ENCODE measurements at regions of chr7 and their contacts with region 1.

Region 1: DNA sequence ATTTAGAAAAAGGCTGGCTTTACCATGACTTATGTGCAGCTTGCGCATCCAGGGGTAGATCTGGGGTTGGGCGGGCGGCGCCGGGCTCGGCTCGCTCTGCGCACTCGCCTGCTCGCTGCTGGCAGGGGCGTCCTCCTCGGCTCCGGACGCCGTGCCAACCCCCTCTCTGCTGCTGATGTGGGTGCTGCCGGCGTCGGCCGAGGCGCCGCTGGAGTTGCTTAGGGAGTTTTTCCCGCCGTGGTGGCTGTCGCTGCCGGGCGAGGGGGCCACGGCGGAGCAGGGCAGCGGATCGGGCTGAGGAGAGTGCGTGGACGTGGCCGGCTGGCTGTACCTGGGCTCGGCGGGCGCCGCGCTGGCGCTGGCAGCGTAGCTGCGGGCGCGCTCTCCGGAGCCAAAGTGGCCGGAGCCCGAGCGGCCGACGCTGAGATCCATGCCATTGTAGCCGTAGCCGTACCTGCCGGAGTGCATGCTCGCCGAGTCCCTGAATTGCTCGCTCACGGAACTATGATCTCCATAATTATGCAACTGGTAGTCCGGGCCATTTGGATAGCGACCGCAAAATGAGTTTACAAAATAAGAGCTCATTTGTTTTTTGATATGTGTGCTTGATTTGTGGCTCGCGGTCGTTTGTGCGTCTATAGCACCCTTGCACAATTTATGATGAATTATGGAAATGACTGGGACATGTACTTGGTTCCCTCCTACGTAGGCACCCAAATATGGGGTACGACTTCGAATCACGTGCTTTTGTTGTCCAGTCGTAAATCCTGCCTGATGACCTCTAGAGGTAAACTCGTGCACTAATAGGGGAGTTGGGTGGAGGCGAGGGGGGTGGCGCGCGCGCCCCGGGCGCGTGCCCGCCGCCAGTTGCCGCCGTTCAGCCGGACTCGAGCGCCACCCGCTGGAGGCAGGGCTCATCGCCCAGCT is at the start of gene HOXA5:
- DNase-seq: peak; percentile 78 to 96
- H3K4me3 ChIP-seq: peak within 1 kb of the TSS; percentile 16 to 59 (median 24); a peak in 7 of 8 replicates
- H3K27ac ChIP-seq: no peak within 1 kb of the TSS
- H3K4me1 ChIP-seq: peaks cover 0 to 9% (median 5%) of the 10 kb centered on the region in 4 experiments; a peak in 5 of 7 replicates
- H3K27me3 ChIP-seq: peaks cover 97 to 100% (median 99%) of the 10 kb centered on the region in 4 experiments
- CTCF ChIP-seq: peak in 2 of 3 experiments; percentile 91 to 97; a peak in 3 of 4 replicates
- EP300 ChIP-seq: no peak
- POLR2A ChIP-seq: no peak
- RAD21 ChIP-seq: peak; percentile 93 to 97
- total RNA-seq, gene HOXA5: not detected in 2 replicates

Region 2: DNA sequence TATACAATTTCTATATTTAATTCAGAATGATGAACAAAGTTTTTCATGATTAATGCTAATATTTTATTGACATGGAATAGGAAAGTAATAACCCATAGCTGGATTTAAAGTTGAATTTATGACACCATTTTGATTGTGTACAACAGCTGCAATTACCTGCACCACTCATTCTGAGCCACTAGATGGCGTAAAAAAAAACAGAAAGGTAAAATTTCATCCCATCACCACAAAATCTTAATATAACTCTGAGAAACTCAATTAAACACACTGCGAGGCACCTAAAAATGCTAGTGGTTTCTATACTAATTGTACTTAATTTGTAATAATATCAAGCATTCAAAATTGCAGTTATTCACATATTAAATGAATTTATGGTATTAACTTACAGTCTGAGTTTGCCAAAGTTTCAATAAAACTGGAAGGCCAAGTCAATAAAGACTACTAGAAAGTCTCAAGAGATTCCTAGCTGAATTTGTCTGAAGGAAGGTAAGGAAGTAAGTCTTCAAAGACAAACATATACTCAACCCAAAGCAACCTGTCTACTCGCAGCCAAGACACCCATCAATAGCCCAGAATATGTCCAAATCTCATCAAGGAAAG is 461.4 kb before region 1 on chr7:
- CTCF ChIA-PET with region 1: interaction called, 40 read pairs
- POLR2A ChIA-PET with region 1: no interaction called
- DNase-seq: no peak
- H3K4me3 ChIP-seq: no peak overlapping the region
- H3K27ac ChIP-seq: no peak overlapping the region
- H3K4me1 ChIP-seq: peaks cover 0 to 3% (median 1%) of the 10 kb centered on the region in 4 experiments; a peak in 1 of 7 replicates
- H3K27me3 ChIP-seq: peaks cover 0 to 1% (median 0%) of the 10 kb centered on the region in 4 experiments; a peak in 1 of 7 replicates
- CTCF ChIP-seq: peak in 2 of 3 experiments; percentile 37 to 50; a peak in 2 of 4 replicates
- EP300 ChIP-seq: no peak
- POLR2A ChIP-seq: no peak
- RAD21 ChIP-seq: peak; percentile 36 to 45

Region 3: GRCh38 chr7:26853788-26854393 is 289.4 kb before region 1 on chr7:
- CTCF ChIA-PET with region 1: interaction called, 36 read pairs
- POLR2A ChIA-PET with region 1: no interaction called
- DNase-seq: no peak
- H3K4me3 ChIP-seq: no peak overlapping the region
- H3K27ac ChIP-seq: no peak overlapping the region
- H3K4me1 ChIP-seq: peaks cover 2 to 14% (median 7%) of the 10 kb centered on the region in 4 experiments; a peak in 5 of 7 replicates
- H3K27me3 ChIP-seq: peaks cover 10 to 45% (median 24%) of the 10 kb centered on the region in 4 experiments
- CTCF ChIP-seq: peak in 1 of 3 experiments; percentile 13; a peak in 1 of 4 replicates
- EP300 ChIP-seq: no peak
- POLR2A ChIP-seq: no peak
- RAD21 ChIP-seq: peak; percentile 44 to 51

Region 4: GRCh38 chr7:27031289-27032172 is 111.8 kb before region 1 on chr7:
- CTCF ChIA-PET with region 1: no interaction called
- POLR2A ChIA-PET with region 1: no interaction called
- DNase-seq: no peak
- H3K4me3 ChIP-seq: no peak overlapping the region
- H3K27ac ChIP-seq: no peak overlapping the region
- H3K4me1 ChIP-seq: peaks cover 0 to 9% (median 5%) of the 10 kb centered on the region in 4 experiments; a peak in 4 of 7 replicates
- H3K27me3 ChIP-seq: peaks cover 0 to 10% (median 2%) of the 10 kb centered on the region in 4 experiments; a peak in 3 of 7 replicates
- CTCF ChIP-seq: no peak
- EP300 ChIP-seq: no peak
- POLR2A ChIP-seq: no peak
- RAD21 ChIP-seq: no peak

Region 5: DNA sequence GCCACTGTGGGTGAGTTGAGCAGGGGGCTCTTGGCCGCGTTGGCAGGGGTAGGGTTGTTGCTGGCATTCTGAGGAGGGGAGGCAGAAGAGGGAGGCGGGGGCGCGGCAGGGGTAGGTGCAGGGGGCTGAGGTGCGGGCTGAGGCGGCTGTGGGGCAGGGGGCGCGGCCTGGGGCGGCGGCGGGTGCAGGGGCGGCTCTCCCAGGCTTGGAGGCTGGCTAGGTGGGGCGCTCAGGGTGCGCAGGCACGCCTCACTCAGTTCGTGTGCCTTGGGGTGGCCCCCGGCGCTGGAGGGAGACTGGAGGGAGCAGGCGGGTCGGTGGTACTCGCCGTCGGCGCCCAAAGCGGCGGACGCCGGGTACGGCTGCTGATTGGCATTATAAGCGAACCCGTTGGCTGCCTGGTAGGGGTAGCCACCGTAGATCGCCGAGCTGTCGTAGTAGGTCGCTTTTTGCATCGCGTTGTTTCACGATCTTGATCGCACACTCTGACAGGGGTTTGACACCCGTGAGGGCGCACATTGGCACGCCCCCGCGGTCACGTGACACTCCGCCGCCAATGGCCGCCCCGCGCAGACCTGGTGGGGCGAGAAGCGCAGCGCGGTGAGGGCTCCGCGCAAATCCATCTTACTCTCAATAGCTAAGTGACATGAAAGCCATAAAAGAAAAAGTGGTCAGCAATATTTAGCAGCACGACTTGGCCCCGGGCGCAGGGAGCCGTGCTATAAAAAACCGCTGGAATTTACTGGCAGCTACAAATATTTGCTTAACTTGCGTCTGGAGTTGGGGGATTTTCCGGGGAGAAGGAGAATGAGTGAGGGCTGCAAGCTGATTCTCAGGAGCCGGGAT is 32.9 kb before region 1 on chr7:
- CTCF ChIA-PET with region 1: interaction called, 33 read pairs
- POLR2A ChIA-PET with region 1: no interaction called
- DNase-seq: peak in 1 of 2 experiments; percentile 83
- H3K4me3 ChIP-seq: peak overlapping the region in 3 of 4 experiments; percentile 11 to 46 (median 23); a peak in 5 of 8 replicates
- H3K27ac ChIP-seq: no peak overlapping the region
- H3K4me1 ChIP-seq: peaks cover 0 to 22% (median 8%) of the 10 kb centered on the region in 4 experiments; a peak in 5 of 7 replicates
- H3K27me3 ChIP-seq: peaks cover 93 to 98% (median 97%) of the 10 kb centered on the region in 4 experiments
- CTCF ChIP-seq: no peak
- EP300 ChIP-seq: no peak
- POLR2A ChIP-seq: no peak
- RAD21 ChIP-seq: no peak

Region 6: GRCh38 chr7:27130540-27131389 is 12.5 kb before region 1 on chr7 and contains the start of gene HOXA4:
- CTCF ChIA-PET with region 1: interaction called, 13 read pairs
- POLR2A ChIA-PET with region 1: no interaction called
- DNase-seq: peak in 1 of 2 experiments; percentile 91
- H3K4me3 ChIP-seq: peak within 1 kb of the TSS; percentile 19 to 60 (median 36); a peak in 7 of 8 replicates
- H3K27ac ChIP-seq: no peak within 1 kb of the TSS
- H3K4me1 ChIP-seq: peaks cover 0 to 4% (median 2%) of the 10 kb centered on the region in 4 experiments; a peak in 4 of 7 replicates
- H3K27me3 ChIP-seq: peaks cover 97 to 100% (median 100%) of the 10 kb centered on the region in 4 experiments
- CTCF ChIP-seq: no peak
- EP300 ChIP-seq: no peak
- POLR2A ChIP-seq: no peak
- RAD21 ChIP-seq: no peak
- total RNA-seq, gene HOXA4: not detected in 2 replicates

Region 7: GRCh38 chr7:27172823-27173510 is 29.7 kb after region 1 on chr7:
- CTCF ChIA-PET with region 1: interaction called, 20 read pairs
- POLR2A ChIA-PET with region 1: no interaction called
- DNase-seq: peak in 1 of 2 experiments; percentile 61
- H3K4me3 ChIP-seq: peak overlapping the region in 1 of 4 experiments; percentile 36; a peak in 2 of 8 replicates
- H3K27ac ChIP-seq: no peak overlapping the region
- H3K4me1 ChIP-seq: peaks cover 4 to 11% (median 5%) of the 10 kb centered on the region in 4 experiments; a peak in 5 of 7 replicates
- H3K27me3 ChIP-seq: peaks cover 95 to 100% (median 100%) of the 10 kb centered on the region in 4 experiments
- CTCF ChIP-seq: no peak
- EP300 ChIP-seq: no peak
- POLR2A ChIP-seq: no peak
- RAD21 ChIP-seq: no peak